Dorsolateral prefrontal cortex (tissue), 120 donors: ENCODE measurements at regions of chr11 and their contacts with region 1.

Region 1: GRCh38 chr11:129695575-129696308 is 119.9 kb upstream of the TMEM45B start:
- DNase-seq: peak in 8 of 10 donors; percentile 18 to 67 (median 34)
- H3K4me3 ChIP-seq: peak overlapping the region in 54 of 59 donors; percentile 10 to 67 (median 44)
- H3K27ac ChIP-seq: no peak overlapping the region
- H3K27me3 ChIP-seq: peaks cover 0 to 30% (median 0%) of the 10 kb centered on the region in 45 donors
- CTCF ChIP-seq: peak in 54 of 56 donors; percentile 37 to 75 (median 65)

Region 2: DNA sequence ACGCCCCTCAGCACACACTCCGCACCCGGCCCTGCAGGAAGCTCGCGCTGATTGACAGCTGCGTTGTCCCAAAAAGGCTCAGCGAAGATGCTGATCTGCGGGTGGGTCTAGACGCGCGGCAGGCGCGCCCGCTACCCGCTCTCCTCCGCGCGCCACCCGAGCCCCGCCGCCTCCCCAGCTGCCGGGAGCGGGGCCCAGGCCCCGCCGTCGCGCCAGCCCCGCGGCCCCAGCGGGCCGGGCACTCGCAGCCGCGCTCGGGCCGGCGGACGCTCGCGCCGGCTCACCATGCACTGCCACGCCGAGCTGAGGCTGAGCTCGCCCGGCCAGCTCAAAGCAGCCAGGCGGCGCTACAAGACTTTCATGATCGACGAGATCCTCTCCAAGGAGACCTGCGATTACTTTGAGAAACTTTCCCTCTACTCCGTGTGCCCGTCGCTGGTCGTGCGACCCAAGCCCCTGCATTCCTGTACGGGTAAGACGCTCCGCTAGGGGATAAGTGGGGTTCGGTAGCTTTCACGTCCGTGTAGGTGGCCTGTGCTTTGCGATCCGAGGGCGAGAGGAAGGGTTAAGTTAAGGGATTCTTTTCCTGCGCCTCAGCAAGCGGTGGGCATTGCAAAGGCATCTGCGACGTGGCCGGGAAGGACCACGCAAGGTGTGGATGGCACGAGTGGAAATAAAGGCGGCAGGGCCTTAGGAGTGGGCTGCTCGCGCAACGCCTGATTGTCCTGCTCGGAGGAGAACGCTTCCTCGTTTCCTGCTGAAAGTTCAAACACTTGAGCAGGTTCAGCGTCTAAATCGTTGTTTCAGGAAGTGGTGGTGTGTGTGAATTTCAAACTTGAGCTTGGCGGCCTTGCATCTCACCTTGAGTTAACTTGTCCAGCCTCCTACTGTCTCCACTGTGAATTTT is 319.7 kb before region 1 on chr11 and contains the start of gene BARX2:
- intact Hi-C with region 1: loop called in 1 of 2 experiments (anchors 5 kb)
- DNase-seq: peak in 5 of 10 donors; percentile 27 to 58 (median 45)
- H3K4me3 ChIP-seq: peak within 1 kb of the TSS in 55 of 59 donors; percentile 3 to 65 (median 37)
- H3K27ac ChIP-seq: no peak within 1 kb of the TSS
- H3K27me3 ChIP-seq: peaks cover 12 to 100% (median 88%) of the 10 kb centered on the region in 45 donors
- CTCF ChIP-seq: peak in 50 of 56 donors; percentile 6 to 66 (median 43)
- total RNA-seq, gene BARX2: 0.22 to 2.3 (median 0.67) TPM in 105 of 120 experiments, not detected in the others